ENCODE measurements at regions of chr2 and their contacts with region 1.

Region 1: DNA sequence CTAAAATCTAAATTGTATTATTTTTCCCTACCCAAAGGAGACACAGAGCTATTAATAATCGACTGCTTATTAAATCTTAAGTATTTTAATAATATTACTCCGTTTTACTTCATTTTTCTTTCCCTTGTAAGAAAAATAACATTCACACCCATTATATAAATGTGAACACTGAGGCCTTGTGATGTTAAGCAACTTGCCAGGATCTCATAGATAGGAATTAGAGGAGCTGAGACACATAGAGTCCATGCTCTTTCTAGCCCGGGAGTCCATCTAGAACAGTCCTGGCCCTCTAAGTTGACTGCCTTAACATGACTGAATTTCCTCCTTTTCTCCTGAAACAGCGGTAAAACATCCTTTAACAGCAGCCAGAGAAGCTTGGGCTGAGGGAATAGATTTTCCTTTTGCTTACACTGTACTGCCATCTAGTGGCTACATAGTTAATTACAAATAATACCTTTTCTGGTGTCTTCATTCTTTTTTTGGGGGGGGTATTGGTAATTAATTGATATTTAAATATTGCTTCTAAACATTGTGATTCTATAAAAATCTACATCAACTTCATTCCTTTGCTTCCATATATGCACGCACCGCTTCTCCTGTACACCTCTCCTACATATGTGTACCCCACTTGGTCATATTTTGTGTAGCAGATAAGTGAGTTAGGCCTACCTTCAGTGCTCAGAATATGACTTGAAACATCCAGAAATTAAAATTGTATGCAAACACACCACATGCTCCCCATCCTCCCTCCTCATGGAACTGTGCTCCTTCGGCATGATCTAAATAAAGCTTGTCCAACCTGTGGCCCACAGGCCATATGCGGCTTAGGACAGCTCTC is 125.8 kb upstream of the HNMT start:
- DNase-seq: no peak
- H3K4me3 ChIP-seq: no peak overlapping the region
- CTCF ChIP-seq: peak; percentile 32

Region 2: GRCh38 chr2:136423516-136423996 is 1414.9 kb before region 1 on chr2:
- CTCF ChIA-PET with region 1: interaction called, 34 read pairs
- POLR2A ChIA-PET with region 1: no interaction called
- DNase-seq: no peak
- H3K4me3 ChIP-seq: peak overlapping the region; percentile 59
- CTCF ChIP-seq: peak; percentile 88

Region 3: GRCh38 chr2:136932700-136933099 is 905.8 kb before region 1 on chr2:
- CTCF ChIA-PET with region 1: interaction called, 18 read pairs
- POLR2A ChIA-PET with region 1: no interaction called
- DNase-seq: no peak
- H3K4me3 ChIP-seq: no peak overlapping the region
- CTCF ChIP-seq: peak; percentile 31

Measured in AG04449 (cell line).